Caco-2 (cell line): ENCODE measurements at regions of chr3 and their contacts with region 1.

Region 1: DNA sequence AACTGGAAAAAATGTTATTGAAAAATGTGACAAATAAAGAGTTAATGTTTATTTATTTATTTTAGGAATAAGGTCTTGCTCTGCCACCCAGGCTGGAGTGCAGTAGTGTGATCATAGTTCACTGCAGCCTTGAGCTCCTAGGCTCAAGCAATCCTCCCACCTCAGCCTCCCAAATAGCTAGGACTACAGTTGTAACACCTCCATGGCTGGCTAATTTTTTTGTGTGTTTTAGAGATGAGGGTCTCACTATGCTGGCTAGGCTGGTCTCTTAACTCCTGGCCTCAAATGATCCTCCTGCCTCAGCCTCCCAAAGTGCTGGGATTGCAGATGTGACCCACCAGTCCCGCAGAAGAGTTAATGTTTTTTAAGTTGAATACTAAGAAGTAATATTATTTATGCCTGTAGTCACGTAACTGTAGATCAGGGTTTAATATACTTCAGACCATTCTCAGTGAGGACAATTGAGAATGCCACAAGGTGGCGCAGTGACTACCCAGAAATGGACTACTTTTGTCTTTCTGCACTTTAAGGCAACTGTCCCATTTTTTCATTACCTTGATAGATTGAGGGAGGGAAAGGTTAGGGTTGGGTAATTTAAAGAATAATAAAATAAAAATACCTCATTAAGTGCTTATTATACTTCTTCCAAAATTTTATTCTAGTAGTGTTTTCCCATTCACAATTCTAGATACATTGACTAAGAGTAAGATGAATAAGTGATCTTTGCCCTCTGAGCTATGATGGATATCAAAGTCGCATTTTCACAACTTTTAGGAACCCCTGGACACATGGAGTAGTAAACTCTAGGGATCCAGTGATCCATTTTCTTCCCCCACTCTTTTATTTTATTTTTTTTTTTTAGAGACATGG is 6.0 kb downstream of the MUC13 start:
- DNase-seq: peak; percentile 51 to 57
- H3K4me3 ChIP-seq: no peak overlapping the region
- H3K4me3 Mint-ChIP-seq: no peak overlapping the region
- H3K27ac Mint-ChIP-seq: no peak overlapping the region
- H3K4me1 ChIP-seq: no peaks in the 10 kb centered on the region
- H3K4me1 Mint-ChIP-seq: no peaks in the 10 kb centered on the region
- H3K27me3 ChIP-seq: no peaks in the 10 kb centered on the region
- H3K27me3 Mint-ChIP-seq: no peaks in the 10 kb centered on the region
- CTCF ChIP-seq: peak; percentile 70 to 73

Region 2: DNA sequence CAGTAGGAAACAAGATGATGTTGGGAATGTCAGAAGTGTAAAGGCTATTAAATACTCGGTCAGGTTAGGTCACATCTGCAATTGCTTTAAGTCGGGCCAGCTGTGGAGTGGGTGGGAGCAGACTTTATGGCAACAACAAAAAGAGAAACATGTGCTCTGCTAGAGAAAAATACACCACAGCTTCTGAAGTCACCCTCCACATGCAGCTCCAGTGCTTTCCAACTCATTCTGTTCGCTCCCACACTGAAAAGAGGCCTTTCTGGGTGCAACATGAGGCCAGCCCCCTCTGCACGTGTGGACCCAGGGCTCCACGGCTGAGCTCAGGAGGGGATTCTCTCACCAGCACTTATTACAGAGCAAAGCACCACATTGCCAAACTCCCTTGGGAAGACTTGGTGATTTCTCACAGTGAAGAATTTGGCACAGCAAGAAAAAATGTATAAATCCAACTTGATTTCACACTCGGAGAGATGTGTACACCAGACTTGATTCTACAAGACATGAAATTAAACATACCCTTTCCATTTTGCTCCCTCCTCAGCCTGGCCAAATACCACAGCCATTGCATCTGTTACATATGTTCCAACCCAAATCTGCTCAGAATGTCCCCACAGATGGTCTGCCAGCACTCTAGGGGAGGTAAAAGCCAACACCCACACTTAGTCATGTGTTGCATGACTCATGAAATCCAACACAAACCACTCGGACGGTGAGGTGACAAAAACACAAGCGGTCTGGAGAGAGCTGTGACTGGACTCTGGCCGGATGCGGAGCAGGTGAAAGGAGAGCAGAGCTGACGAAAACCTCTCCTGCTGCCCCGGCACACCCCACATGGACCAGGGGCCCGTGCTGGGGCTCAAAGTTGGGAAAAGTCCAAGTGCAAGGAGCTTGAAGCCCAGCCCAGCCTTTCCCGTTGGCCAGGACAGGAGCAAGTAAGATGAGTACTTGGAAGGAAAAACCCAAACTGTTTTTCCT is 116.0 kb before region 1 on chr3:
- CTCF ChIA-PET with region 1: no interaction called
- POLR2A ChIA-PET with region 1: no interaction called
- intact Hi-C with region 1: no loop called
- DNase-seq: peak in 1 of 2 experiments; percentile 53
- H3K4me3 ChIP-seq: no peak overlapping the region
- H3K4me3 Mint-ChIP-seq: no peak overlapping the region
- H3K27ac Mint-ChIP-seq: peak overlapping the region; percentile 85
- H3K4me1 ChIP-seq: peaks cover 52% of the 10 kb centered on the region
- H3K4me1 Mint-ChIP-seq: peaks cover 14% of the 10 kb centered on the region
- H3K27me3 ChIP-seq: no peaks in the 10 kb centered on the region
- H3K27me3 Mint-ChIP-seq: no peaks in the 10 kb centered on the region
- CTCF ChIP-seq: no peak

Region 3: GRCh38 chr3:124951511-124952281 is 23.1 kb after region 1 on chr3:
- CTCF ChIA-PET with region 1: interaction called, 4 read pairs
- POLR2A ChIA-PET with region 1: no interaction called
- intact Hi-C with region 1: loop called (anchors 2 kb)
- DNase-seq: peak in 1 of 2 experiments; percentile 39
- H3K4me3 ChIP-seq: no peak overlapping the region
- H3K4me3 Mint-ChIP-seq: no peak overlapping the region
- H3K27ac Mint-ChIP-seq: no peak overlapping the region
- H3K4me1 ChIP-seq: no peaks in the 10 kb centered on the region
- H3K4me1 Mint-ChIP-seq: no peaks in the 10 kb centered on the region
- H3K27me3 ChIP-seq: no peaks in the 10 kb centered on the region
- H3K27me3 Mint-ChIP-seq: no peaks in the 10 kb centered on the region
- CTCF ChIP-seq: no peak

Region 4: GRCh38 chr3:124986158-124987143 is 57.9 kb after region 1 on chr3:
- CTCF ChIA-PET with region 1: no interaction called
- POLR2A ChIA-PET with region 1: no interaction called
- intact Hi-C with region 1: loop called (anchors 1 kb)
- DNase-seq: peak in 1 of 2 experiments; percentile 40
- H3K4me3 ChIP-seq: no peak overlapping the region
- H3K4me3 Mint-ChIP-seq: no peak overlapping the region
- H3K27ac Mint-ChIP-seq: peak overlapping the region; percentile 32
- H3K4me1 ChIP-seq: no peaks in the 10 kb centered on the region; the same call in 1 of the 2 replicates
- H3K4me1 Mint-ChIP-seq: peaks cover 8% of the 10 kb centered on the region
- H3K27me3 ChIP-seq: no peaks in the 10 kb centered on the region
- H3K27me3 Mint-ChIP-seq: no peaks in the 10 kb centered on the region
- CTCF ChIP-seq: peak; percentile 67 to 72

Region 5: DNA sequence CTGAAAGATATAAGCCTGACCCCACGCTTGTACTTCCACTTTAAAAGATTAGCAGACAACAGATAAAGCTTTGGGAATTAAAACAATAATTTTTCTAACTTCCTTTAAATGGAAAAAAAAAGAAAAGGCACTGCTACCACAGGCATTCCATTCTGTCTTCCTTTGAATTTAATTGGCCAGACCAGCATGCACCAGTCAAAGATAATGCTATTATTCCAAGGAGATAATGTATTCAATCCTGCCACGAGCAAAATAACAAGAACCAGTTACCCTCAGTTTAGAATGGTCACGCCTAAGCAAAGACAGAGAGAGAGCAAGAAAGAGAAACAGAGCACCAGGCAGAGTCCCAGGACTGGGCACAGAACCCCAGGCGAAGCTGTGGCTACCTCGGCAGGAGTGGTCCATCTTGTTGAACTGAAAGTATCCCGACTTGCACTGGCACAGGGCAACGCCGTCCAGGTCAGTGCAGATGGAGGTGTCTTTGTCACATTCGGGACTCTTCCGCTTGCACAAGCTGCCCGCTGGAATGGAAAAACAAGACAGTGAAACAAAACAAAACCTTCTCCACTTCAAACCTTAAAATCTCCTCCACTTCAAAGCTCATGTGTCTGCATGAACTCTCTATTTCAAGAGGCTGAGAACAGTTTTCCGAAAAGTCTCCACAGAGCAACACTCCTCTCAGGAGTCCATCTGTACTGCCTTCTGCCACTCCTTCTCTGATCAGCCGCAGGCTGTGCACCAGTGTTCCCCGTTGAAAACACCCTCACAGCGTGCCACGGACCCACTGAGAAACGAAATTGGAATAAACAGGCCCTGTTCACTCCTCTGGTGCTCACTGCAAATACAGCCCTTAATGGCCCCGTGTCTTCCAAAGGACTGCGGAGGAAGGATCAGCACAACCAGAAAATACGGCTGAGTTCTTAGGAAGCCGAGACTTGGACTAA is 69.0 kb after region 1 on chr3:
- CTCF ChIA-PET with region 1: no interaction called
- POLR2A ChIA-PET with region 1: no interaction called
- intact Hi-C with region 1: no loop called
- DNase-seq: no peak
- H3K4me3 ChIP-seq: no peak overlapping the region
- H3K4me3 Mint-ChIP-seq: no peak overlapping the region
- H3K27ac Mint-ChIP-seq: no peak overlapping the region
- H3K4me1 ChIP-seq: peaks cover 12% of the 10 kb centered on the region
- H3K4me1 Mint-ChIP-seq: peaks cover 2% of the 10 kb centered on the region
- H3K27me3 ChIP-seq: no peaks in the 10 kb centered on the region
- H3K27me3 Mint-ChIP-seq: no peaks in the 10 kb centered on the region
- CTCF ChIP-seq: no peak

Region 6: DNA sequence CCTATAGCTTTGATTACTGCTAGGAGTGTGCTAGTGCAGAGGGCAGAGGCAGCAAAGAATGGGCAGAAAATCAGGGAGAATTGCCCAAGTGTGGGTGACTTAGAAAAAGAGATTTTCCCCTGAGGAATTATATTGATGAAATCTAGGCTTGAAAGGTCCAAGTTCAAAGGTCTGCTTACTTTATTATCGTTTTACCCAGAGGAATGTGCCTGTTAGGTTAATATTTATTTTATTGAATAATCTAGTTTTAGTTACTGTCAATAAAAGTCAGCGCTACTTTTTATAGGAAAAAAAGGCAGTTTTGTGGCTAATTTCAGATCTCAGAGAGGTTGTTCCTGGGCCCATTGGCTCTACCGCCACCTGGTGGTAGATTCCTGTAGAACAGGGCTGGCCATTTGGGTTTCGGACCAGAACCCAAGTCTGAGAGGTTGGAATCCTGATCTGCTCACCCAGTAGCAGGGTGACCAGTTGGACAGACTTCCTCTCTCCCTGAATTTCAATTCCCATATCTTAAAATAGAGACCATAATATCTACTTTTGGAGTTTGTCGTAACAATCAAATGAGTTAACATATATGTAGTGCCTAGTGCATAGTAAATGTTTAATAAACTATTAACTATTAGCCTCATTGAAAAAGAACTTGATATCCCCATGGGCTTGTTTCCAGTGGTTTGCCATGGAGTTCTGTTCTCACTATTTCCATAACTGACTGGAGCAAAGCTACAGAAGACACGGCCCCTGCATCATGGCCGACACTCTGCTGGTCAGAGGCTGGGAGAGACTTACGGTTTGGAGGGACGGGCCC is 509.3 kb after region 1 on chr3:
- CTCF ChIA-PET with region 1: no interaction called
- POLR2A ChIA-PET with region 1: no interaction called
- intact Hi-C with region 1: loop called (anchors 1 kb)
- DNase-seq: peak; percentile 60 to 72
- H3K4me3 ChIP-seq: no peak overlapping the region
- H3K4me3 Mint-ChIP-seq: no peak overlapping the region
- H3K27ac Mint-ChIP-seq: no peak overlapping the region
- H3K4me1 ChIP-seq: peaks cover 33% of the 10 kb centered on the region
- H3K4me1 Mint-ChIP-seq: peaks cover 20% of the 10 kb centered on the region
- H3K27me3 ChIP-seq: no peaks in the 10 kb centered on the region
- H3K27me3 Mint-ChIP-seq: no peaks in the 10 kb centered on the region
- CTCF ChIP-seq: peak; percentile 89 to 93

Region 7: GRCh38 chr3:125585595-125586223 is 657.1 kb after region 1 on chr3:
- CTCF ChIA-PET with region 1: no interaction called
- POLR2A ChIA-PET with region 1: no interaction called
- intact Hi-C with region 1: loop called (anchors 10 kb)
- DNase-seq: peak; percentile 56 to 66
- H3K4me3 ChIP-seq: no peak overlapping the region
- H3K4me3 Mint-ChIP-seq: no peak overlapping the region
- H3K27ac Mint-ChIP-seq: no peak overlapping the region
- H3K4me1 ChIP-seq: peaks cover 3% of the 10 kb centered on the region
- H3K4me1 Mint-ChIP-seq: peaks cover 7% of the 10 kb centered on the region
- H3K27me3 ChIP-seq: no peaks in the 10 kb centered on the region
- H3K27me3 Mint-ChIP-seq: no peaks in the 10 kb centered on the region
- CTCF ChIP-seq: peak; percentile 75 to 85